ENCODE measurements at regions of chr6 and their contacts with region 1.

Region 1: GRCh38 chr6:159104931-159105330 is 60.1 kb upstream of the TAGAP start:
- DNase-seq: no peak

Region 2: DNA sequence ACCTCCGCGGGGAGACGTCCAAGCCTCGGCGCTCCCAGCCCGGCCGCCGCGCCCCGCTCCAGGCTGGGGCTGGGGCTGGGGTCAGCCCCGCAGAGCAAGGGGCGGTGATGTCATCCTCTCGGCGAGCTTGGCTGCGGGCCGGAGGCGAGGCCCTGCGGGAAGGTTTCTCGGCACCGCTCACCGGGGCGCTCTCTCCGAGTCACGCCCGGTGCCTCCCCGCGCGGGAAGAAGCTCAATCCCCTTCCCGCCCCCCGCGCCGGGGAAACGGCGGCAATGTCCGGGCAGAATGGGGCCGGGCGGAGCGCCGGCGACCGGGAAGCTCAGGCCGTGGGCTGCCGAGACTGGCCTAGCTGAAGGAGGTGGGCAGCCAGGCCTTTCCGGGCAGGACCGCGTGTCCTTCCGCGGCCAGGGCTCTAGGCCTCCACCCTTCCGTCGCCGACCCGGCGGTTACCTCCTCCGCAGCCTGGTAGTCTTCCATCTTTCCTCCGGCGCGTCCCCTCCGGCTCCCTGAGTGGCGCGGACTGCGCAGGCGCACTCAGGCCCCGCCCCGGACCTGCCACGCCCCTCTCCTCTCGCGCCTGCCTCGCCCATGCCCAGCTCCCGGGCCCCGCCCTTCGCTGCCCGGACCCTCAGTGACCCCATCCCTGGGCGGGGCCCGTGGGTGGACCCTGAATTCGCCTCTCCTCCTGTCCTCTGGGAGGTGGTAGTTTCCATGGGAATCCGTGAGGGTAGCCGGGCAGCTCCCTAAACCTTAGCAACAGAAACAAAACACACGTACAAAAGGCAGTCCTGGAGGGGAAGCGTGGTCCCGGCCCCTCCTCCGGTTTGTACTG is 460.5 kb before region 1 on chr6 and contains the start of gene DYNLT1:
- intact Hi-C with region 1: no loop called
- DNase-seq: peak; percentile 98
- total RNA-seq, gene DYNLT1: 91.3 to 91.4 TPM

Region 3: DNA sequence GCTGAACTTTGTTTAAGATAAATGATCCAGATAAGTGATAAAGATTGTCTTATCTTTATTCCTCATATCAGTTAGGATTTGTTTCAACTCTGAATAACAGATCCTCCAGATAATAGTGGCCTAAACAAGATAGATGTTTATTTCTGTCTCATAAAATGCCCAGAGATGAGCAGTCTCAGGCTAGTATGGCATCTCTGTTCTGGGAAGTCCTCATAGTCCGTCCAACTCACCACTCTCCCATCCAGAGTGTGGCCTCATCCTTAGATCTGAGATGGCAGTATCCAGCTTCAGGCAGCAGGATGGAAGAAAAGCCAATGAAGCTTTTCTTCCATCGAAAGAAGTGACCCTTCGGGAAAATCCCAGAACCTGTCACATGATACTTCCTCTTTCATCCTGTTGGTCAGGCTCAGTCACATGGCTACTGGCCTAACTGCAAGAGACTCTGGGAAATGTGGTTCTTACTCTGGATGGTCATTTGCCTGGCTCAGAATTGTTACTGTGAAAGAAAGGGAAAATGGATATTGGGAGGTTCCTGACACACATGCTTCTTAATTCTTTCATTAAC is 30.7 kb before region 1 on chr6:
- intact Hi-C with region 1: no loop called
- DNase-seq: no peak

Region 4: GRCh38 chr6:159118924-159119323 is 14.0 kb after region 1 on chr6:
- intact Hi-C with region 1: loop called in 1 of 2 experiments (anchors 1 kb)
- DNase-seq: no peak

Region 5: DNA sequence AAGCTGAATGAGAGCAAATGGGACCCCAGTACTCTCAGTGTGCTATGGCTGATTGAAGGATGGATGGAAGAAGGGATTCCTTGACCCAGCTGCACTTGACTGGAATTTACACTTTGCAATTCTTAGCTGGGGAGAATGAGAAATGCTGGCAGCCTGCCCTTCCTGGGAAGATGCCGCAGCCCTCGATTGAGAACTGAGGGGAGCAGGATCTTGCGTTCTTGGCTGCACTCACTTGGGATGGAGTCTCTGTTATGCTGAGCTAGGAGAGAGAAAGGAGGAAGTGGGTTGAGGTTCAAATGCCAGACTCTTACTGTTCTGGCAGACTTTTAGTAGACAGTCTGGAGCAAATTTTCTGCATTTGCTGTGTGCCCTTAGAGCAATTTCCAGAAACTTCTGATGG is 285.4 kb after region 1 on chr6:
- intact Hi-C with region 1: no loop called
- DNase-seq: no peak

Region 6: GRCh38 chr6:161079566-161080262 is 1974.8 kb after region 1 on chr6:
- intact Hi-C with region 1: no loop called
- DNase-seq: no peak